Esophagus muscularis mucosa (tissue), 4 donors: ENCODE measurements at regions of chr1 and their contacts with region 1.

Region 1: GRCh38 chr1:246622035-246622652 is 55.9 kb downstream of the CNST start:
- DNase-seq: no peak
- H3K4me3 ChIP-seq: no peak overlapping the region
- H3K27ac ChIP-seq: peak overlapping the region; percentile 18 to 60 (median 56)
- H3K4me1 ChIP-seq: peaks cover 9 to 50% (median 43%) of the 10 kb centered on the region in 4 donors
- H3K27me3 ChIP-seq: no peaks in the 10 kb centered on the region
- CTCF ChIP-seq: no peak
- EP300 ChIP-seq: no peak
- POLR2A ChIP-seq: no peak

Region 2: GRCh38 chr1:246579818-246580217 is 42.3 kb before region 1 on chr1:
- intact Hi-C with region 1: loop called (anchors 5 kb)
- DNase-seq: no peak
- H3K4me3 ChIP-seq: peak overlapping the region in 1 of 4 donors; percentile 4
- H3K27ac ChIP-seq: peak overlapping the region; percentile 70 to 84 (median 79)
- H3K4me1 ChIP-seq: peaks cover 78 to 95% (median 90%) of the 10 kb centered on the region in 4 donors
- H3K27me3 ChIP-seq: no peaks in the 10 kb centered on the region
- CTCF ChIP-seq: no peak
- EP300 ChIP-seq: no peak
- POLR2A ChIP-seq: no peak